ENCODE measurements at regions of chr9 and their contacts with region 1.

Region 1: GRCh38 chr9:8468045-8468637 is 668.6 kb upstream of the DMAC1 start:
- DNase-seq: no peak
- H3K4me3 ChIP-seq: no peak overlapping the region
- H3K27ac ChIP-seq: no peak overlapping the region
- H3K4me1 ChIP-seq: no peaks in the 10 kb centered on the region
- H3K27me3 ChIP-seq: no peaks in the 10 kb centered on the region
- CTCF ChIP-seq: no peak
- EP300 ChIP-seq: no peak
- POLR2A ChIP-seq: no peak

Region 2: DNA sequence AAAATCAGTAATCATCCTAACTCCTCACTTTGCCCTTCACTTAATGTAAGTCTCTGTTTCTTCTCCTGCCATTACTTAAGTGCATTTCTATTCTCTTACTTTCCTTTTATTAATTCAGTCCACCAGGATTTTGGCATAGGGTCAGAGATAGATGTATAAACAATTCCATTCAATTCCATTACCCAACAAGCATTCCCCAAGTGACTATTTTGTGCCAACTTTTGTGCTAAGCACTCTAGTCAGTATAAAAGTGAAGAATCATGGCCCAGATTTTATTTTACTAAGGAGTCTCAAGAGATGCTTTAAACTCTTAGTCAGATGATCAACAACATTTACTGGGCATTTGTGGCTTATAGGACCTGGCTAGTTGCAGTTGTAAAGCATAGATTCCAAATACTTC is 827.9 kb before region 1 on chr9:
- in situ Hi-C with region 1: no loop called
- intact Hi-C with region 1: no loop called
- DNase-seq: no peak
- H3K4me3 ChIP-seq: no peak overlapping the region
- H3K27ac ChIP-seq: no peak overlapping the region
- H3K4me1 ChIP-seq: no peaks in the 10 kb centered on the region
- H3K27me3 ChIP-seq: no peaks in the 10 kb centered on the region
- CTCF ChIP-seq: no peak
- EP300 ChIP-seq: no peak
- POLR2A ChIP-seq: no peak

Region 3: GRCh38 chr9:7777771-7778170 is 690.4 kb before region 1 on chr9:
- in situ Hi-C with region 1: no loop called
- intact Hi-C with region 1: loop called (anchors 10 kb)
- DNase-seq: no peak
- H3K4me3 ChIP-seq: no peak overlapping the region
- H3K27ac ChIP-seq: no peak overlapping the region
- H3K4me1 ChIP-seq: no peaks in the 10 kb centered on the region
- H3K27me3 ChIP-seq: no peaks in the 10 kb centered on the region
- CTCF ChIP-seq: no peak
- EP300 ChIP-seq: no peak
- POLR2A ChIP-seq: no peak